Mammary epithelial cell (primary cell): ENCODE measurements at regions of chr17 and their contacts with region 1.

Region 1: GRCh38 chr17:4017377-4017776 is 53.1 kb upstream of the ATP2A3 start:
- DNase-seq: no peak
- H3K4me3 ChIP-seq: no peak overlapping the region
- H3K27ac ChIP-seq: no peak overlapping the region
- H3K4me1 ChIP-seq: no peaks in the 10 kb centered on the region
- H3K27me3 ChIP-seq: no peaks in the 10 kb centered on the region
- CTCF ChIP-seq: no peak

Region 2: DNA sequence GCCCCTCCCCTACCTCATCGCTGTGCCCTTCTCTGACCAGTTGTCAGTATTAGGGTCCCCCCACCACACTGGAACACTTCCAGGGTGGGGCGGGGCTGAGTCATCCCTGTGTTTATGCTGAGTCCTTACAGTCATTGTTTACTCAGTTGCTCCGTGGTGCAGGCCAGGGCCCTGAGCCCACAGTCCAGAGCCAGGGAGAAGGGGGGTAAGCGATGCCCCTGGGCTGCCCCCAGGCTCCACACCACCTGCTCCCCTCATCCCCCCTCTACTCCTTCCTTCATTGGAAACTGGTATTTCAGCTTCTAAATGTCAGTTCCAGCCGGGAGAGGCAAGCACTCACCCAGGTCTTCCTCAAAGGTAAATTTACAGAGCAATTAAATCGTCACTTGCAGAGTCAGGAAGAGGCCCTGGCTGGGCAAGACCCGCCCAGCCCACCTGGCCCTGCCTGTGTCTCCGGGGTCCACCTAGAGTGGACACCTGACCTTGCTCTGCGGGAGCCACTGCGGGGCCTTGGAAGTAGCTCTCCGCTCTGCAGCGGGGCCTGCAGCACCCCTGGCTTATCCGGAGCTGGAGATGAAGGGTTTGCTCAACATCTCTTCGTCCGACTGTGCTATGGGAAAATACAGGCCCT is 58.0 kb before region 1 on chr17:
- CTCF ChIA-PET with region 1: no interaction called
- dilution Hi-C with region 1: loop called (anchors 5 kb)
- in situ Hi-C with region 1: no loop called
- intact Hi-C with region 1: no loop called
- DNase-seq: no peak
- H3K4me3 ChIP-seq: no peak overlapping the region
- H3K27ac ChIP-seq: no peak overlapping the region
- H3K4me1 ChIP-seq: no peaks in the 10 kb centered on the region
- H3K27me3 ChIP-seq: peaks cover 12% of the 10 kb centered on the region
- CTCF ChIP-seq: no peak

Region 3: GRCh38 chr17:4066210-4066609 is 48.8 kb after region 1 on chr17:
- CTCF ChIA-PET with region 1: no interaction called
- dilution Hi-C with region 1: loop called (anchors 5 kb)
- in situ Hi-C with region 1: no loop called
- intact Hi-C with region 1: no loop called
- DNase-seq: no peak
- H3K4me3 ChIP-seq: no peak overlapping the region
- H3K27ac ChIP-seq: no peak overlapping the region
- H3K4me1 ChIP-seq: no peaks in the 10 kb centered on the region
- H3K27me3 ChIP-seq: no peaks in the 10 kb centered on the region
- CTCF ChIP-seq: no peak

Region 4: GRCh38 chr17:4220655-4221054 is 203.3 kb after region 1 on chr17:
- CTCF ChIA-PET with region 1: no interaction called
- dilution Hi-C with region 1: no loop called
- in situ Hi-C with region 1: no loop called
- intact Hi-C with region 1: no loop called
- DNase-seq: no peak
- H3K4me3 ChIP-seq: no peak overlapping the region
- H3K27ac ChIP-seq: no peak overlapping the region
- H3K4me1 ChIP-seq: peaks cover 14% of the 10 kb centered on the region
- H3K27me3 ChIP-seq: no peaks in the 10 kb centered on the region
- CTCF ChIP-seq: no peak

Region 5: DNA sequence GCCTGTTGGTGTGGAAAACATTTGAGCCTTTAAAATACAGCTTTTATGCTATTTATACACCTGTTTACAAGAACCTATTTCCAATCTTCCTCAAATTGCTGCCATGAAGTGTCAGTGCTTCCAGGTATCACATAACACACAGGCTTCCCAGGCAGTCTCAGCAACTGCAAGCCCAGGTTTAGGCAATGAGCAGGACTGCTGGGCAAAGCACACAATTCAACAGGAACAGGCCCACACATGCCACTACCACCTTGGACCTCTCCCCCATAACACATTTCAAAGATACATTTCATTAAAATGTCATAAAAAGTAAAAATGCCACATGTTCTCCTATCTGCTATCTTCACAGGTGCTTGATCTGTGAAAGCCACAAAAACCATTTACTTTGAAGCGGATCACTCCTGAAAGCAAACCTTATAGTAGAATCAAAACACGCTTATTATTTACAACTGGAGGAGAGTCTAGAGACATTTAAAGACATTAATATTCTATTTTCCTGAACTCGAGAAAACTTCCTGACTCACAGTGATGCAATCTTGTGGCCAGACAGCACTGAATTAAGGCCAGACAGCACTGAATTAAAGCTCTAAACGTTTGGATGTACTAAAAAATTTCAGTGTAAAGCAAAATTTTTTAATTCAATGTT is 214.9 kb after region 1 on chr17:
- CTCF ChIA-PET with region 1: no interaction called
- dilution Hi-C with region 1: no loop called
- in situ Hi-C with region 1: no loop called
- intact Hi-C with region 1: no loop called
- DNase-seq: peak; percentile 74
- H3K4me3 ChIP-seq: no peak overlapping the region
- H3K27ac ChIP-seq: peak overlapping the region; percentile 76
- H3K4me1 ChIP-seq: peaks cover 45% of the 10 kb centered on the region
- H3K27me3 ChIP-seq: no peaks in the 10 kb centered on the region
- CTCF ChIP-seq: no peak